ENCODE measurements at regions of chr16 and their contacts with region 1.

Region 1: GRCh38 chr16:79071424-79071823 is 529.1 kb downstream of the MAF start:
- DNase-seq: peak; percentile 79
- H3K4me3 ChIP-seq: no peak overlapping the region
- H3K27ac ChIP-seq: peak overlapping the region; percentile 65 to 75 (median 67)
- H3K4me1 ChIP-seq: peaks cover 0 to 60% (median 32%) of the 10 kb centered on the region in 4 donors
- H3K27me3 ChIP-seq: no peaks in the 10 kb centered on the region
- CTCF ChIP-seq: no peak
- EP300 ChIP-seq: no peak
- POLR2A ChIP-seq: no peak

Region 2: GRCh38 chr16:78689028-78689427 is 382.4 kb before region 1 on chr16:
- intact Hi-C with region 1: no loop called
- DNase-seq: no peak
- H3K4me3 ChIP-seq: no peak overlapping the region
- H3K27ac ChIP-seq: no peak overlapping the region
- H3K4me1 ChIP-seq: peaks cover 0 to 9% (median 0%) of the 10 kb centered on the region in 4 donors
- H3K27me3 ChIP-seq: no peaks in the 10 kb centered on the region
- CTCF ChIP-seq: no peak
- EP300 ChIP-seq: no peak
- POLR2A ChIP-seq: no peak

Region 3: GRCh38 chr16:78888454-78888853 is 183.0 kb before region 1 on chr16:
- intact Hi-C with region 1: no loop called
- DNase-seq: no peak
- H3K4me3 ChIP-seq: no peak overlapping the region
- H3K27ac ChIP-seq: no peak overlapping the region
- H3K4me1 ChIP-seq: no peaks in the 10 kb centered on the region
- H3K27me3 ChIP-seq: no peaks in the 10 kb centered on the region
- CTCF ChIP-seq: no peak
- EP300 ChIP-seq: no peak
- POLR2A ChIP-seq: no peak

Region 4: GRCh38 chr16:78957326-78958100 is 113.9 kb before region 1 on chr16:
- intact Hi-C with region 1: loop called (anchors 10 kb)
- DNase-seq: no peak
- H3K4me3 ChIP-seq: no peak overlapping the region
- H3K27ac ChIP-seq: no peak overlapping the region
- H3K4me1 ChIP-seq: no peaks in the 10 kb centered on the region
- H3K27me3 ChIP-seq: no peaks in the 10 kb centered on the region
- CTCF ChIP-seq: no peak
- EP300 ChIP-seq: no peak
- POLR2A ChIP-seq: no peak

Region 5: DNA sequence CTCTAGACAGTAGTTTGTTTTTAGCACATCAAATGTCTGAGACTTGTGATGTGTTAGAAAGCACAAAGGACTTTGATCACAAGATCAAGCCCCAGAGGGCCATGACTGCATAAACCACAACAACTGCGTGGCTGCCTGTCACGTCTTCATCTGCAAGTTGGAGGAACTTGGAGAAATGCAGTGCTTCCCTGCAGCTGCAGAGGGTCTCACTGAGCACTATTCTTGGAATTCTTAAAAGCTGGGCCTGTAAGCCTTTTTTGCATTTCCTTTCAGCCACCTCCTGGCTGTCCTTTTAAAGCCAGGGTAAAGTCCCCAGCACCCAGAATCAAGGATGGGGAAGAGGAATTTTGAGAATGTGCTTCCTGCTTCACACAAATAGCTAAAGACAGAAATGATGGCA is 97.8 kb after region 1 on chr16:
- intact Hi-C with region 1: loop called (anchors 10 kb)
- DNase-seq: no peak
- H3K4me3 ChIP-seq: no peak overlapping the region
- H3K27ac ChIP-seq: no peak overlapping the region
- H3K4me1 ChIP-seq: peaks cover 0 to 19% (median 3%) of the 10 kb centered on the region in 4 donors
- H3K27me3 ChIP-seq: no peaks in the 10 kb centered on the region
- CTCF ChIP-seq: no peak
- EP300 ChIP-seq: no peak
- POLR2A ChIP-seq: no peak

Region 6: GRCh38 chr16:79334127-79334526 is 262.7 kb after region 1 on chr16:
- intact Hi-C with region 1: loop called (anchors 5 kb)
- DNase-seq: no peak
- H3K4me3 ChIP-seq: no peak overlapping the region
- H3K27ac ChIP-seq: no peak overlapping the region
- H3K4me1 ChIP-seq: peaks cover 0 to 31% (median 15%) of the 10 kb centered on the region in 4 donors
- H3K27me3 ChIP-seq: no peaks in the 10 kb centered on the region
- CTCF ChIP-seq: no peak
- EP300 ChIP-seq: no peak
- POLR2A ChIP-seq: no peak